Naive thymus-derived CD4-positive, alpha-beta T cell (primary cell): ENCODE measurements at regions of chr10 and their contacts with region 1.

Region 1: DNA sequence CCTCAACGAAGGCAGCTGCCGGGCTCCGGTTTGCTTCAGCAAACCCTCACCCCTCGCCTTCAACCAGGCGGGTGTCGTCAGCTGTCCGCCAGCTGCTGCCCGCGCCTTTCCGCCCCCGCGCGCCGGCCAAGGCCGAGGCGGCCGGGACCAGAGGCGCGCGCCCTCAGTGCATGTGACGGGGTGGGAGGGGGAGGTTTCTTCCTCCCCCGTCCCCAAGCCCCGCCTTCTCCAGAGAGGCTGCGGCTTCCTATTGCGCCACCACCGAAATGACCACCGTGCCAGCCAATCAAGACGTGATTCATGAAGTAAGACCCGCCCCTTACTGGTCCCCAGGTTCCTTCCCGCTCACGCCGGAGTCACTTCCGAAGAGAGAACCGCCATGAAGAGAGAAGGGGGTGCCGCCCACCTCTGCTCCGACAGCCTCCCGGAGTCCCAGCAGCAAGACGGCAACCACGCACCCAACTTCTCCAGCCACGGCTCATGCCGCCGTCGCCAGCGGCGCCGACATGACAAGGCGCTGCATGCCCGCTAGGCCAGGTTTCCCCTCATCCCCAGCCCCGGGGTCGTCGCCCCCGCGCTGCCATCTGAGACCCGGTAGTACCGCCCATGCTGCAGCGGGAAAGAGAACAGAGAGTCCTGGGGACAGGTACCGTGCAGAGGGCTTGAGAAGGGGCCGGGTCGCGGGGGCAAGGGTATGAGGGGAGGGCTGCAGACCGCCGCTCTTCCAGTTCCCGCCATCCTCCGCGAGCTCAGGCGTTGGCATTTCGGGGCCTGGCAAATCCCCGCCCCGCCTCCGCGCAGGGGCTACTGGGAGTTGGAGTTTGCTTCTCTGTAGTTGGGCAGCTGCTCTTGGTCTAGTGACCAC is at the start of gene SLF2:
- DNase-seq: peak; percentile 69 to 91 (median 88)
- ATAC-seq: peak; percentile 96
- H3K4me3 ChIP-seq: peak within 1 kb of the TSS; percentile 96
- H3K4me3 Mint-ChIP-seq: peak within 1 kb of the TSS; percentile 91 to 100 (median 99)
- H3K27ac ChIP-seq: peak within 1 kb of the TSS; percentile 89
- H3K27ac Mint-ChIP-seq: peak within 1 kb of the TSS; percentile 88 to 99 (median 97)
- H3K4me1 ChIP-seq: peaks cover 12 to 13% of the 10 kb centered on the region in 2 donors
- H3K4me1 Mint-ChIP-seq: peaks cover 22 to 63% (median 60%) of the 10 kb centered on the region in 7 donors
- H3K27me3 ChIP-seq: no peaks in the 10 kb centered on the region
- H3K27me3 Mint-ChIP-seq: no peaks in the 10 kb centered on the region
- total RNA-seq, gene SLF2: 20.1 to 43.7 (median 38.8) TPM

Region 2: GRCh38 chr10:100827819-100828737 is 84.8 kb before region 1 on chr10:
- CTCF ChIA-PET with region 1: no interaction called
- POLR2A ChIA-PET with region 1: no interaction called
- intact Hi-C with region 1: loop called in 1 of 2 experiments (anchors 2 kb)
- DNase-seq: peak in 3 of 9 donors; percentile 18 to 36 (median 29)
- ATAC-seq: peak; percentile 37
- H3K4me3 ChIP-seq: peak overlapping the region; percentile 56
- H3K4me3 Mint-ChIP-seq: peak overlapping the region; percentile 85 to 97 (median 88)
- H3K27ac ChIP-seq: no peak overlapping the region
- H3K27ac Mint-ChIP-seq: peak overlapping the region in 2 of 9 donors; percentile 14 to 50
- H3K4me1 ChIP-seq: peaks cover 9% of the 10 kb centered on the region in 2 donors
- H3K4me1 Mint-ChIP-seq: peaks cover 25 to 45% (median 31%) of the 10 kb centered on the region in 7 donors
- H3K27me3 ChIP-seq: peaks cover 11 to 34% of the 10 kb centered on the region in 2 donors
- H3K27me3 Mint-ChIP-seq: peaks cover 26 to 86% (median 47%) of the 10 kb centered on the region in 5 donors

Region 3: DNA sequence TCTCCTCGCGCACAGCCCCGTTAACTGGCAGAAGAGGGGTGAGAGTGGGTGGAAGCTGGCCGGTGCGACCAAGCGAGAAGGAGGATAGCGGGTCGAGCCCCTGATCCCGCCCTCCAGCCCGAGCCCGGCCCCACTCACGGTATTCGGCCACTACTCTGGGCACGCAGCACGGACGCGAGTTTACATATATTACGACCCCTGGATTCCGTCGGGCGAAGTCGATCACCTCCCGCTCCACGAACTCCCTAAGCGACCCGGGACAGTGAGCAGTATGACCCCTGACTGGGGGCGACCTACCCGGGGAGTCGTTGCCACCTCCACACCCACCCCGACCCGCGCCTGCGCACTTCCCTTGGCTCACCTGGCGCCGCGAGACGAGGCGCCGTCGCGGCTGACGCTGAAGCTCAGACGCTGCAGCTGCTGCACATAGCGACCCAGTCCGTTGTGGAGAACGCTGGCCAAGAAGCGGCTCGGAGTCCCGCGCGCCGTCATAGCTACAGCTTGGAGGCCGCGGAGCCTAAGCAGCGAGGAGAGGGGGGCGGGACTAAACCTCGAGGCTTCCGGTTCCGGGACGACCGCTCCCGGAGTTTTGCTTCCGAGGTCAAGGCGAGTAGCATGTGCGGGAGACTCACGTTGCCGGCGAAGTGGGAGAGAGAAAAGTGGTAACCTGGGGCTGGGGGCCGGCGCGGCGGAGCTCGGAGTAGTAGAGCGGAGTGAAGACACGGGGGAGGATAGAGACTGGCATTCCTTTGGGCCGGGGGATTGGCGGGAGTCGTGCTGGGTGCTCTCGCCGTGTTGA is 74.3 kb after region 1 on chr10 and contains the starts of genes MRPL43 and TWNK:
- CTCF ChIA-PET with region 1: no interaction called
- POLR2A ChIA-PET with region 1: interaction called, 4 read pairs
- intact Hi-C with region 1: loop called (anchors 1 kb)
- DNase-seq: peak; percentile 68 to 88 (median 84)
- ATAC-seq: peak; percentile 94
- H3K4me3 ChIP-seq: peak within 1 kb of the TSS; percentile 89
- H3K4me3 Mint-ChIP-seq: peak within 1 kb of the TSS; percentile 91 to 100 (median 95)
- H3K27ac ChIP-seq: peak within 1 kb of the TSS; percentile 81
- H3K27ac Mint-ChIP-seq: peak within 1 kb of the TSS; percentile 80 to 98 (median 92)
- H3K4me1 ChIP-seq: peaks cover 17 to 24% of the 10 kb centered on the region in 2 donors
- H3K4me1 Mint-ChIP-seq: peaks cover 23 to 60% (median 38%) of the 10 kb centered on the region in 7 donors
- H3K27me3 ChIP-seq: no peaks in the 10 kb centered on the region
- H3K27me3 Mint-ChIP-seq: no peaks in the 10 kb centered on the region
- total RNA-seq, gene MRPL43: 35.8 to 74.5 (median 46.5) TPM
- total RNA-seq, gene TWNK: 5.8 to 17.3 (median 14.8) TPM